ENCODE measurements at regions of chr7 and their contacts with region 1.

Region 1: DNA sequence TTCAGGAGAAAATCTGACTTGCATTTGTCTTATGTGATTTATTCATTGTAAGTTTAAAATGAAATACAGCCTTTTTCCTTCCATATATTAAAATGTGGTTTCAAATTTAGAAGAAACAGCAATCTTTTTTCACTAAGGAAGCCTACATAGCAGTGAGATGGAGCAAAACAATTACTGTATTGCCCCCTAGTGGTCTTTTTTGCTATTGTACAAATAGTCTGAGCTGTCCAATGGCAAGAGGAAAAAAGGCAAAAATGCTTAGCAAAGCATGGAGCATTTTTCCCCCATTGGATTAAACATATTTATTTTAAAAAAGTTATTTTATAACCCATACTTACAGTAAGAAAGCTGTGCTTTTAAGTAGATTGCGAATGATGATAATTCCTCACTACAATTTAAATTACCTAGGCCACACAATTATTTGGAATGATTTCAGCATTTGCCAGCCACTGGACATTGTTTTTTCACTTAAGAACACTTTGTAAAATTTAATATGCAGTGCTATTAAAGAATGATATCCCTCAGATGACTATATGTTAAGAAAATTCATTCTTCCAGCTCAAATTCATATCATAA is 119.5 kb downstream of the CPED1 start:
- DNase-seq: no peak
- ATAC-seq: peak; percentile 55 to 87 (median 79)
- H3K4me3 ChIP-seq: no peak overlapping the region
- H3K27ac ChIP-seq: no peak overlapping the region
- H3K4me1 ChIP-seq: peaks cover 10% of the 10 kb centered on the region
- H3K27me3 ChIP-seq: no peaks in the 10 kb centered on the region
- CTCF ChIP-seq: peak; percentile 84

Region 2: DNA sequence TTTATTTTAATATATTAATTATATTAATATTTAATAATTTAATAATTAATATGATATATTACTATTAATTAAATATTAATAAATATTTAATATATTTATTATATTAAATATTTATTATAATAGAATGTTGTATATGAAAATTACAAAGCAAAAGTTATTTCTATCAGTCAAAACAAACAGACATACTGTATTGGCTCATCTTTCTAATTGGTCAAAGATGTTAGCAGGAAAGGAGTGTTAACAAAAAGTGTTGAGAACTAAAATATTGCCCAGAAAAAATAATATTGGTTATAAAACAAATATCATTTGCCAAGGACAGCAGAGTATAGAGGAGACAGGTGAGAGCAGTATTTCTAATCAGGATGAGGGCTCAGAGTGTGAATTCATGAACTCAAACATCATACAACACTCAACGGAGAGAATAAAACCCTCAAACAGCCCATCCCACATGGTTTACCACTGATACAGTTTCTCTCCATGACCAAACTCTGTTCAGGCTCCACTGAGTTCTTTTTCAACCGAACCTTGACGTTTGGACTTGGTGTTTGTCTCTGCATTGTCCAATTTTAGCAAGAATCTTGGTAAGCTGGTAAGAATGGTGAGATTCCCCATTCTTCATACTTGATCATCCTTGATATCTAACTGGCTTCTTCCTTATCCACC is 308.1 kb before region 1 on chr7:
- intact Hi-C with region 1: loop called in 1 of 2 experiments (anchors 5 kb)
- DNase-seq: no peak
- ATAC-seq: no peak
- H3K4me3 ChIP-seq: no peak overlapping the region
- H3K27ac ChIP-seq: no peak overlapping the region
- H3K4me1 ChIP-seq: no peaks in the 10 kb centered on the region
- H3K27me3 ChIP-seq: no peaks in the 10 kb centered on the region
- CTCF ChIP-seq: no peak

Region 3: DNA sequence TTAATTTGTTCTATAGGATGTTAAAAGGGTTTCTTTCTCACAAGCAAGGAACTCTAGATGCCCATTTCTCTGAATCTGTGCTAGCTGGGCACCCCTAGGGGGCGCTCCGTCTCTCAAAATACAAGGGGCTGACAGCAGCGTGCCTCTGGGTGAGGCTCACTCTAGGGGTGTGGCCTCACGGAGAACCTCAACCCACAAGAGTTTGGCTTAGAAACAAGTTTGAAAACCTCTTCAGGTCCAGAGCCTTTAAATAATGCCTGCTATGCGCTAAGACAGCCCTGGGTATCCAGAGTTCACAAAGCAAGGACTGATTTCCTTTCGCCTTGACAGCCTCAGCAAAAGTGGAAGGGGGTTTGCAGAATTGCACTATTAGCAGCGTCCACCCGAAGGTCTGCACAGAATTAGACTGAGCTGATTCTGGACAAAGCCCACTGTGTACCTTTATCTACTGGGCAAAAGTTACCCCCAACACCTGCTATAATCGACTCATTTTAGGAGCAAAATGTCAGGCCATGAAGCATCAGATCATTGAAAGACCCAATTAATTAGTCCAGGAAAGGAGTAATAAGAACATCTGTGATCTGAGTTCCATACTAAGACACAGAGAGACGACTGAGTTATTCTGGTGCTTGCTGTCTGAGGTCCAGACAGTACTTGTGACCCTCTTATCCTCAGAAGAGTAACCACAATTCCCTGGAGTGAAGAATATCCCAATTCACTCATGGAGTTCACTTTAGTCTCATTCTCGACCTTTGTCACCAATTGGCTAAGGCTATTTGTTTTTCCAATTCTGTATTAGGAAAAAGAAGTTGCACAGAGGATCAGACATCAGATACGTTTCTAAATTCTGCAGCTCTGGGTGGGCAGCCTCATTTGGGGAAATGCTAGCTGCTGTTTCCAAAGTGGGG is 120.1 kb before region 1 on chr7:
- intact Hi-C with region 1: loop called (anchors 2 to 5 kb)
- DNase-seq: peak; percentile 90 to 95
- ATAC-seq: peak; percentile 83 to 89 (median 87)
- H3K4me3 ChIP-seq: peak overlapping the region; percentile 75
- H3K27ac ChIP-seq: peak overlapping the region; percentile 94
- H3K4me1 ChIP-seq: peaks cover 12% of the 10 kb centered on the region
- H3K27me3 ChIP-seq: no peaks in the 10 kb centered on the region
- CTCF ChIP-seq: peak; percentile 98

Region 4: DNA sequence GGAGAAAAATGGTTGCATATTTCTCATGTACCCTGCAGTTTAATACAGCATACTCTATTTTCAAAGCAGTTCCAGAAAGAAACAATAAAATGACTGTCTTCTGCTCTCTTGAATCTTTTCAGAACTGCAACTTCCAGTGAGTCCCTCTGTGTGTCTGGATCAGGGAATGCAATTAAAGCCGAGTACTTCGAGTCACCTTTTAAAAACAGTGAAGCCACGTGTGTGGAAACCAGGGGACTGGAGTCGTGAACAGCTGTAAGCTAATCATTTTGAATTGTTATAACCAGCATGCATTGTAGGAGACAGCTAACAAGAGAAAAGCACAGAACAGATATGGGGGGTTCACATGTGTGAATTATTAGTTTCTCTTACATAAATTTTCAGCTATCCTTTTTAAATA is 10.4 kb before region 1 on chr7:
- intact Hi-C with region 1: no loop called
- DNase-seq: no peak
- ATAC-seq: peak in 1 of 4 donors; percentile 36
- H3K4me3 ChIP-seq: no peak overlapping the region
- H3K27ac ChIP-seq: no peak overlapping the region
- H3K4me1 ChIP-seq: peaks cover 6% of the 10 kb centered on the region
- H3K27me3 ChIP-seq: no peaks in the 10 kb centered on the region
- CTCF ChIP-seq: no peak

Region 5: GRCh38 chr7:121153995-121154394 is 46.0 kb after region 1 on chr7:
- intact Hi-C with region 1: no loop called
- DNase-seq: no peak
- ATAC-seq: no peak
- H3K4me3 ChIP-seq: no peak overlapping the region
- H3K27ac ChIP-seq: no peak overlapping the region
- H3K4me1 ChIP-seq: no peaks in the 10 kb centered on the region
- H3K27me3 ChIP-seq: no peaks in the 10 kb centered on the region
- CTCF ChIP-seq: no peak

Measured in psoas muscle (tissue), 8 donors.